ENCODE measurements at regions of chr1 and their contacts with region 1.

Region 1: DNA sequence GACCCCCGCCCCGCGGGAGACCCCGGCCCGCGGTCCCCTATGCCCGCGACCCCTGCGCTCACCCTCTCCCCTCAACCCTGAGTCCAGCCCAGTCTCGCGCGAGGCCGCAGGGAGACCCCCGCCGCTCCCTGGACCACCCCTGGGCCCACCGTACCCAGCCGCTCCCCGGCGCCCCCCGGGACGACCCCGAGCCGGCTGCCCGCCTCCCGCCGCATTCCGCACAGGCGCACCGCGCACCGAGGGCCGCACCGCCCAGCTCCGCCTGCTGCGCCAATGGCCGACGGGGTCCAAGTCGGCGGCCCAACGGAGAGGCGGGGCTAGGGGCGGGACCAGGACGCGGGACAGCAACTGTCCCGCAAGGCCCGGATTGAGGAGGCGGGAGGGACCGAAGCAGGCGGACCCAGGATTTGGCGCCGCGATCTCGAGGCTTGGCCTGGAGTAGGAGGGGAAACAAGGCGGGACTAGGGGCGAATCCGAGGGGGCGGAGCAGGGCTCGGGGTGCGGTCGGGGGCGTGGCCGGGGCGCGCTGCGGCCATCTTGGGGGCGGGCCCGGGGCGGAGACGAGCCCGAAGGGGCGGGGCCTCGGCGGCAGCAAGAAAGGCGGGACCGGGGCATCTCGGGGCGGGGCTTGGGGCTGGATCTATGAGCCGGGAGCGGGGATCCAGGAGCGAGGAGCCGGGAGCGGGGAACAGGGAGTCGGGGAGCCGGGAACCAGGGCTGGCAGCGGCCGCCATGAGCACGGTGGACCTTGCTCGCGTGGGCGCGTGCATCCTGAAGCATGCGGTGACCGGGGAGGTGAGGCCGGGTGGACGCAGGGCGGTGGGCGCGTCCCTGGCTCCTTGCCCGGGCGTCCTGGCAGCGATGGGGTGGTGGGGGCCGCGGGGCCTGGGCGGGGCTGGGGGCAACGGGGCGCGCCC is at the start of gene PRXL2B:
- DNase-seq: peak; percentile 97
- ATAC-seq: peak; percentile 67
- H3K4me3 ChIP-seq: peak within 1 kb of the TSS; percentile 63 to 81 (median 77)
- H3K4me3 Mint-ChIP-seq: peak within 1 kb of the TSS; percentile 95
- H3K27ac ChIP-seq: peak within 1 kb of the TSS; percentile 98 to 99
- H3K27ac Mint-ChIP-seq: peak within 1 kb of the TSS; percentile 99
- H3K4me1 ChIP-seq: peaks cover 38 to 53% of the 10 kb centered on the region in 2 donors
- H3K4me1 Mint-ChIP-seq: peaks cover 43% of the 10 kb centered on the region
- H3K27me3 ChIP-seq: no peaks in the 10 kb centered on the region
- H3K27me3 Mint-ChIP-seq: no peaks in the 10 kb centered on the region
- CTCF ChIP-seq: no peak
- total RNA-seq, gene PRXL2B: 27.0 and 27.9 TPM in 2 replicates

Region 2: DNA sequence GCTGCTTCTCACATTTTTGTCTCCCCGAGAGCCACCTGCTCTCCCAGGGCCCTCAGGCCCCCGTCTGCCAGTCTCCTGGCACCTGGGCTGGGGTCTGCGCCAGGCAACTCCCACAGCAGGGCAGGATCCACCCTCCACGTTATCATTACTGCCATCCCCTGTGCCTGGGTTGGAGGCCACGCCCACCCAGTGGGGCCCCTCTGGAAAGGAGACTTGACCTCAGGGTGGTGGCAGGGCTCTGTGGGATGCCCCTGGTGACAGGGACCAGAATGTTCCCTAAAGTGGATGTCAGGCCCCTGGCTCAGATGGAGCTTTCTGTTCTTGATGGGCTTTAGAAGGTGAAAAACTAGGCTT is 291.7 kb before region 1 on chr1:
- CTCF ChIA-PET with region 1: no interaction called
- POLR2A ChIA-PET with region 1: no interaction called
- intact Hi-C with region 1: no loop called
- DNase-seq: no peak
- ATAC-seq: no peak
- H3K4me3 ChIP-seq: no peak overlapping the region
- H3K4me3 Mint-ChIP-seq: no peak overlapping the region
- H3K27ac ChIP-seq: peak overlapping the region in 1 of 2 donors; percentile 29
- H3K27ac Mint-ChIP-seq: peak overlapping the region; percentile 32
- H3K4me1 ChIP-seq: peaks cover 59 to 78% of the 10 kb centered on the region in 2 donors
- H3K4me1 Mint-ChIP-seq: peaks cover 81% of the 10 kb centered on the region
- H3K27me3 ChIP-seq: no peaks in the 10 kb centered on the region
- H3K27me3 Mint-ChIP-seq: no peaks in the 10 kb centered on the region
- CTCF ChIP-seq: no peak

Region 3: GRCh38 chr1:2412519-2413233 is 173.7 kb before region 1 on chr1 and contains the start of gene PEX10:
- CTCF ChIA-PET with region 1: interaction called, 5 read pairs
- POLR2A ChIA-PET with region 1: interaction called, 3 read pairs
- intact Hi-C with region 1: loop called (anchors 1 kb)
- DNase-seq: peak; percentile 98
- ATAC-seq: peak; percentile 94
- H3K4me3 ChIP-seq: peak within 1 kb of the TSS; percentile 19 to 78 (median 69)
- H3K4me3 Mint-ChIP-seq: peak within 1 kb of the TSS; percentile 89
- H3K27ac ChIP-seq: peak within 1 kb of the TSS; percentile 52 to 90
- H3K27ac Mint-ChIP-seq: peak within 1 kb of the TSS; percentile 92
- H3K4me1 ChIP-seq: peaks cover 45 to 51% of the 10 kb centered on the region in 2 donors
- H3K4me1 Mint-ChIP-seq: peaks cover 43% of the 10 kb centered on the region
- H3K27me3 ChIP-seq: no peaks in the 10 kb centered on the region
- H3K27me3 Mint-ChIP-seq: no peaks in the 10 kb centered on the region
- CTCF ChIP-seq: no peak
- total RNA-seq, gene PEX10: 16.5 and 18.4 TPM in 2 replicates

Region 4: DNA sequence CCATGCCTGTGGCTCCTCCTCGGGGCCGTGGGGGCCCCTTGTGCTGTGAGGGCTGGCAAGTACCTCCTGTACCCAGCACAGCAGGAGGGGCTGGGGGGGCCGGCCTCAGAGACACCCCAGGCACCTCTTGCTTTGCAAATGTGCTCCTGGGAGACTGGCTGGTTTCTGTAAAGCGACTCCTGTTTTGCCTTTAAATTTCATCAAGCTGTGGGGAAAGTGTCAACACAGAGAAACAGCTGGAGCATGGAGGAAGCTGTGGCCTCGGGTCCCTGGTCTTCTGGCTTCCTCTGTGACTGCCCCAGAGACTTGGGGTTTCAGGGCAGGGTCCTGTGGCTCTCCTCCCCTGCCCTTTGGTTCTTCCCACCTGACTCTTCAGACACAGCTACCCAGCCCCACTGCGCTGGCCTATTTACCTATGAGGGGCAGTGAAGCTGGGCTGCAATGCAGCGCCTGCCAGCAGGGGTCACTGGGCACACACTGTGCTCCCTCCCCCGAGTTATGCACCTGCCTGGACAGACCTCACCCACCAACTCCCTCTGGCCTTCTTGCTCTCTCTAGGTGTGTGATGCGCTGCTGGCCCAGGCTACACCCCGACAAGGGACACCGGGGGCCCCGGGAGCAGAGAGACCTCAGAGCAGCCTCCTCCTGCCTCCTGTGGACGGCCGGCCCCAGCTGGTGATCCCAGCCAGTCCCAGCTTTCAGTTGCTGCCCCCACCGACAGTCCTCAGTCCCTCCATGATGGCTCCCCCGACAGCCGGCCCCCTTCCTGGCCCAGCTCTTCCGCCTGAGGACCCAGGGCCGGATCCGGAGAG is 156.4 kb before region 1 on chr1:
- CTCF ChIA-PET with region 1: no interaction called
- POLR2A ChIA-PET with region 1: no interaction called
- intact Hi-C with region 1: no loop called
- DNase-seq: no peak
- ATAC-seq: no peak
- H3K4me3 ChIP-seq: no peak overlapping the region
- H3K4me3 Mint-ChIP-seq: no peak overlapping the region
- H3K27ac ChIP-seq: no peak overlapping the region
- H3K27ac Mint-ChIP-seq: no peak overlapping the region
- H3K4me1 ChIP-seq: no peaks in the 10 kb centered on the region
- H3K4me1 Mint-ChIP-seq: no peaks in the 10 kb centered on the region
- H3K27me3 ChIP-seq: peaks cover 0 to 10% (median 0%) of the 10 kb centered on the region in 4 experiments
- H3K27me3 Mint-ChIP-seq: no peaks in the 10 kb centered on the region
- CTCF ChIP-seq: no peak

Region 5: DNA sequence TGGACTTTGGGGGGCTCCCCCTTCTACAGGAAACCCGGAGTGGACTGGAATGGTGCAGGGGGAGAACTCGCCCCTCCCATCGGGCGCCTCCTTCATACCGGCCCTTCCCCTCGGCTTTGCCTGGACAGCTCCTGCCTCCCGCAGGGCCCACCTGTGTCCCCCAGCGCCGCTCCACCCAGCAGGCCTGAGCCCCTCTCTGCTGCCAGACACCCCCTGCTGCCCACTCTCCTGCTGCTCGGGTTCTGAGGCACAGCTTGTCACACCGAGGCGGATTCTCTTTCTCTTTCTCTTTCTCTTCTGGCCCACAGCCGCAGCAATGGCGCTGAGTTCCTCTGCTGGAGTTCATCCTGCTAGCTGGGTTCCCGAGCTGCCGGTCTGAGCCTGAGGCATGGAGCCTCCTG is 30.1 kb before region 1 on chr1 and contains the start of gene TNFRSF14:
- CTCF ChIA-PET with region 1: interaction called, 47 read pairs
- POLR2A ChIA-PET with region 1: interaction called, 77 read pairs
- intact Hi-C with region 1: loop called (anchors 1 kb)
- DNase-seq: peak; percentile 88
- ATAC-seq: peak; percentile 61
- H3K4me3 ChIP-seq: peak within 1 kb of the TSS; percentile 82 to 91 (median 85)
- H3K4me3 Mint-ChIP-seq: peak within 1 kb of the TSS; percentile 95
- H3K27ac ChIP-seq: peak within 1 kb of the TSS; percentile 87 to 99
- H3K27ac Mint-ChIP-seq: peak within 1 kb of the TSS; percentile 97
- H3K4me1 ChIP-seq: peaks cover 31 to 43% of the 10 kb centered on the region in 2 donors
- H3K4me1 Mint-ChIP-seq: peaks cover 48% of the 10 kb centered on the region
- H3K27me3 ChIP-seq: no peaks in the 10 kb centered on the region
- H3K27me3 Mint-ChIP-seq: no peaks in the 10 kb centered on the region
- CTCF ChIP-seq: peak; percentile 36
- total RNA-seq, gene TNFRSF14: 239 and 243 TPM in 2 replicates

Region 6: DNA sequence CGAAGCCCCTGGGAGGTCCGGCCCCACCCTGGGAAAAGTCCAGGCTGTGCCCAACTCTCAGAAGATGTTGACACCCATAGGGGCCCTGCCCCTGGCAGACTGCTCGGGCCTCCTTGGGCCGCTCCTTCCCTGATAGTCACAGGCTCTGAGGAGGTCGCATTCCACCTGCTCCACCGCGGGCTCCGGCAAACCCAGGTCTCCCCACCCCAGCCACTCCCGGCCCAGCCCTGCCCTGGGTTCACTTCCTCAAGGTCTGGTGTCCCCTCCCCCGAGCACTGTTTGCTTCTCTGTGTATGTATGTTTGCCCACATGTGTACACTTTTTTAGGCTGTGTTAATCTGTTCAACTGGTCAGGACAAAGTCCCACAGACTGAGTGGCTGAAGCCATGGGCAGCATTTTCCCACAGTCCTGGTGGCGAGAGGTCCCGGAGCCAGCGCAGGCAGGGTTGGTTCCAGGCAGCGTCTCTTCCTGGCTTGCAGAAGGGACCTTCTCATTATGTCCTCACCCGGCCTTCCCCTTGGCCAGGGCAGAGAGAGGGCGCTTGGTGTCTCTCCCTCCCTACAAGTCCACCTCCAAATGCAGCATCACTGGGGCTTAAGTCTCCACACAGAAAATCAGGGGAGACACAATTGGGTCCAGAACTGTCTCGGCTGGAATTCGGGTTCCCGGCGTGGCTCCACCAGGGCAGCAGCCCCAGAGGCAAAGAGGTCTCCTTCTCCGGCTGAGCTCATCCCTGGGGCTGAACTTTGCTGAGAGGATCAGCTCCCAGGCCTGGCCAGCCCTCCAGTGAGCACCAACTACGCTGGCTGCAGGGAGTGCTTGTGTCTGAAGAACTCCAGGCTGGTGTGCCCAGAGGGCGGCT is 10.4 kb before region 1 on chr1:
- CTCF ChIA-PET with region 1: interaction called, 14 read pairs
- POLR2A ChIA-PET with region 1: interaction called, 38 read pairs
- intact Hi-C with region 1: loop called (anchors 1 kb)
- DNase-seq: peak; percentile 66
- ATAC-seq: no peak
- H3K4me3 ChIP-seq: peak overlapping the region in 2 of 5 experiments; percentile 46 to 59
- H3K4me3 Mint-ChIP-seq: peak overlapping the region; percentile 83
- H3K27ac ChIP-seq: peak overlapping the region; percentile 21 to 100
- H3K27ac Mint-ChIP-seq: peak overlapping the region; percentile 98
- H3K4me1 ChIP-seq: peaks cover 46 to 59% of the 10 kb centered on the region in 2 donors
- H3K4me1 Mint-ChIP-seq: peaks cover 61% of the 10 kb centered on the region
- H3K27me3 ChIP-seq: no peaks in the 10 kb centered on the region
- H3K27me3 Mint-ChIP-seq: no peaks in the 10 kb centered on the region
- CTCF ChIP-seq: no peak

Measured in B cell (primary cell).